ENCODE measurements at regions of chr11 and their contacts with region 1.

Region 1: DNA sequence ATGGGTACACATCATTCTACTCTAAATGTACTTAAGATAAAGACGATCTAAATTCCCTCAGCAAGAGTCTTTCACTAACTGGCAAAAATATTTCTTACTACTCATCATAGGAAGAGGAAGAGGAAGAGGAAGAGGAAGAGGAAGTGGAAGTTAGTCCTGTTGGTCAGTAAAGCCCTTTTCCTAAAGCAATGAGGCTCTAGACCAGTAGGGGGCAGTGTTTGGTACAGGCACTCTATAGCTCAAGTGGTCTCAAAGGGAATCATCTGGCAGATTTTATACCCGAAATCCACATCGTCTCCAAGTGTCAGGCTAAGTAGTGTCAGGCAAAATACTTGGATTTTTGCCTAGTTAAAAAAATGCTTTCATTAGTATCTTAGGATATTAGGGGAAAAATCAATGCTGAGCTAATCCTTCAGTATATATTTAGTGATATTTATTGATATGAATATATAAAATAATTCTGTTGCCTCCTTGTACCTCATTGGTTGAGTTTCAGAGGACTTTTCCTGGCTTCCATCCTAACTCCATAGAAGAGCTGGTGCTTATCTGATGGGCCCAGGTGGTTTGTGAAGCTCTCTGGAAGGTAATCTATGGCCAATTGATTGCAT is 7.7 kb downstream of the BLID start:
- DNase-seq: peak in 1 of 3 donors; percentile 49
- ATAC-seq: no peak
- H3K4me3 ChIP-seq: no peak overlapping the region
- H3K4me1 ChIP-seq: no peaks in the 10 kb centered on the region
- CTCF ChIP-seq: peak; percentile 7

Region 2: GRCh38 chr11:121958971-121959325 is 149.3 kb before region 1 on chr11:
- intact Hi-C with region 1: no loop called
- DNase-seq: no peak
- ATAC-seq: no peak
- H3K4me3 ChIP-seq: no peak overlapping the region
- H3K4me1 ChIP-seq: no peaks in the 10 kb centered on the region
- CTCF ChIP-seq: no peak

Region 3: DNA sequence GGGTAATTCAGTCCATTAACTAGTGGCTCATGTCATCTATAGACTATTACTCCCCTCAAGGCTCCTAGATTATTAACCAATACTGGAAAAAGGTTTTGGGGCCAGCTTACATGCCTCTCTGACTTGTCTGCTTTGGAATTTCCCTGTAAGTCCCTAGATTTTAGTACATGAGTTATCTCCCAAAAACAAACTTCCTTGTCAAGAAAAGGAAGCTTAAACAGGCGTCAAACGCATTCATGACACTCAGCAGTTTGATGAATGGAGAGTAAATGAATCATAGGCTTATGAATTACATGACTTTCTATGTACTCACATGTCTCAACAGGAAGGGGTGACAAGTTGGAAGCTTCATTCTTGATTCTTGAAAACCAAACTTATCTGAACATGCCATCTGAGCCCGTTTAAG is 63.1 kb before region 1 on chr11:
- intact Hi-C with region 1: no loop called
- DNase-seq: no peak
- ATAC-seq: no peak
- H3K4me3 ChIP-seq: no peak overlapping the region
- H3K4me1 ChIP-seq: no peaks in the 10 kb centered on the region
- CTCF ChIP-seq: no peak

Region 4: DNA sequence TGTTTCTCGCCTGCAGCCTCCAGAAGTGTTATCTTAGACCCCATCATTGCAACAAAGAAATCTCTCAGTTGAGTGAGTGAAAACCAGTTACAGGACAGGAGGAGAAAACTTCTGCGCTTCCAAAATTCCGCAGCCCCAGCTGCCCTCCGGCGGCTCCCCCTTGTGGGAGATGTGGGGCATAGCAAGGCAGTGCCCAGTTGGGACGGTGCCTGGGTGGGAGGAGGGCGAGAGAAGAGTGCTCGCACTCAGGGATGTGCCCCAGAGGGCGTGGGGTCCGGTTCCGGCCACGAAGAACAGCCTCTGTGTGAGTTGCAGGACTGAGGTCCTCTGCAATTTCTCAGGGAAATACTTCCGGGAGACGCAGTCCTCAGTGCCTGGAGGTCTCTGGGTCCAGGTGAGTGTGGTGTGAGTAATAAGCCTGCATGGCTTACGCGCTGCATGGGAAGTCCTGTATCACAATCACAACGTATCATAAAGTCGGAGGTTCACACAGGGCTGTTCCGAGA is 94.7 kb after region 1 on chr11:
- intact Hi-C with region 1: loop called in 1 of 2 experiments (anchors 10 kb)
- DNase-seq: peak; percentile 39 to 69 (median 61)
- ATAC-seq: peak; percentile 89
- H3K4me3 ChIP-seq: no peak overlapping the region
- H3K4me1 ChIP-seq: peaks cover 8% of the 10 kb centered on the region
- CTCF ChIP-seq: peak; percentile 76